Activated CD8-positive, alpha-beta T cell treated with anti-CD3 and anti-CD28 coated beads, Interleukin-2, amount 10 ng/mL, durations not matched to agents 7 days and 5 days (primary cell): ENCODE measurements at regions of chr7 and their contacts with region 1.

Region 1: DNA sequence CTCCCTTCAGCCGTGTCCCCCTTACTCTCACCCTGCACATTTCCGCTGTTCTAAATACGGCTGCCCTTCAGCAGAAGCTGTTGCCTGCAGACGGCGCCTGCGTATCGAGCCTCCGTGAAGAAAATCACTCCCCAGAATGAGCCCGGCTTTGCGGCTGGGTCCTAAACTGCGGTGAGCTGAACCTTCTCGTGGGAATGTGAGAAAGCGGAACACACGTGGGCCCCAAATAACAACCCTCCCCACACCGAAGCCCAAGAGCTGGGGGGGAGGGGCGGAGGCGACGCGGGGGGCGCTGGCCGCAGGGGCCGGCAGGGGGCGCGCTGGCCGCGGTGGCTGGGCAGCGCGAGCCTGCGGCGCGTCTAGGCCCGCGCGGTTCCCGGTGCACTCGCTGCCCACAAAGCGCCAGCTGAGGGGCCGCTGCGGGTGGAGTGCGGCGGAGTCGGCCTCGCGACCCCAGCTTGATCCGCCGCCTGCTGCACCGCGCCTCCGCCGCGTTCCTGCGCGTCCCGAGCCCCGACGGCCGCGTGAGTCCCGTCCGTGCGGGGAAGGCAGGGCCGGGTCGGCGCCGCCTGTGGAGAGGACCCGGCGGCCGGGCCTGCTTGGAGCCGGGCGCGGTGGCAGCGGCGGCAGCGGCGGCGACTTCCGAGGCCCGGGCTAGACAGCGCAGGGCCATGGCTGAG is at the start of gene ZNF398:
- DNase-seq: peak; percentile 77
- ATAC-seq: peak; percentile 77
- H3K4me3 Mint-ChIP-seq: peak within 1 kb of the TSS; percentile 84
- H3K27ac Mint-ChIP-seq: peak within 1 kb of the TSS; percentile 91
- H3K4me1 Mint-ChIP-seq: peaks cover 26% of the 10 kb centered on the region
- H3K27me3 Mint-ChIP-seq: no peaks in the 10 kb centered on the region
- total RNA-seq, gene ZNF398: 11.8 to 13.3 TPM

Region 2: DNA sequence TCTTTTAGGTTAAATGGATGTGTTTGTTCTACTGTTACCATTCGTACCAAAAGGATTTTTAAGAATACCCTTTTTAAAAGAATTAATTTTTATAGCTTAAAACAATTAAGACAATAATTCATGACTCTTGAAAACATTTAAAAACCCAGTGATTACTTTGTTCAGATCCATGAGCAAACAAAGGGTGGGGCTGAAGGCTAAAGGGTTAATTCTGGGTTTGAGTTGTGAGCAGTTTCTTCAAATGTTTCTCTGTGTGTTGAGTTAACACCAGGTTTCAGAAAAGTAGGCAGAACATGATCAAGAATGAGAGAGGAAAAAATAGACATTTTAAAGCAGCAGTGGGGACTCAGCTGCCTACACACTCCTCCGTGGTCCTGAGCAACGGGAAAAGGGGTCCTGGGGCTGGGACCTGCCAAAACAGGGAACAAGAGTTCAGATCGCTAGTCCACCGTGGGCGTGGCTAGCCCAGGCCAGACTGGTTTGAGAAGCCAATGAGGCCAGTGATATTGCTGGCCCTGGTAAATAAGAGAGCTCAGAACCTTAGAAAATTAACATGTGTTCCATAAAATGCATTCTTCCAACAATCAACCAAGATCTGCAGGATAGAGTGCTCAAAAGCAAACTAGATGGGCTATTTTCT is 248.2 kb before region 1 on chr7:
- CTCF ChIA-PET with region 1: no interaction called
- POLR2A ChIA-PET with region 1: no interaction called
- DNase-seq: no peak
- ATAC-seq: no peak
- H3K4me3 Mint-ChIP-seq: no peak overlapping the region
- H3K27ac Mint-ChIP-seq: no peak overlapping the region
- H3K4me1 Mint-ChIP-seq: peaks cover 2% of the 10 kb centered on the region
- H3K27me3 Mint-ChIP-seq: no peaks in the 10 kb centered on the region

Region 3: DNA sequence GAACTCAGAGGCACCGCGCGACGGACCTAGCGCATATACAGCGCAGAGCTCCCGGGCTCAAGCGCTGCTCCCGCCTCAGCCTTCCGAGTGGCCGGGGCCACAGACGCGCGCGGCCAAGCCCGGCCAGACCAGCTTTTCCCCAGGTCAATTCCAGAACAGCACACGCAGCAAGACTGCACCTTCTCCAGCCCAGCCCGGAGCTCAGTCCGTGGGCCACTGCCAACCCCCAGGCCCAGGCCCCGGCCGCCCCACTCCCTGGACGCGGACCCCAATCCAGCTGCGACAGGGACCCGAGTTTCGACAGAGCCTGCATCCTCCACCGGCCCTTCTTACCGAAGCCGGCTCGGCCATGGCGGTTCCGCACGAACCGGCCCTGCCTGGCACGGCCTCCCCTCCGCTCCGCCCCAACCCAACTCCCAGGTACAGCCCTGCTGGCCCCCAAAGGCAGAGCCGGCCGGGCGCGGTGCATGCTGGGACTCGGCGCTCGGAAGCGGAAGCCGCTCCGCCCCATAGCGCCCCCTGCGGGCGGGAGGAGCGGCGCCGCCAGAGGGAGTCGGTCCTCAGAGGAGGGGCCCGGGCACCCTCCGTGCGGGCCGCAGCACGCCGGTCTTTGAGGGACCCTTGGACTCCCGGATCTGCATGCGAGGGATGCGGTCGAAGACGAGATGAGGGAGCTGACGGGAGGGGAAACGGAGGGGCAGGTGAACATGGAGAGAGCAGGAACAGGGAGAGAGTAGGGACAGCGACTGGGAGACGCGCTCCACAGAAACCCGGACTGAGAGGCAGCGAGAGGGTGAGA is 21.1 kb before region 1 on chr7 and contains the start of gene ZNF425:
- CTCF ChIA-PET with region 1: interaction called, 44 read pairs
- POLR2A ChIA-PET with region 1: interaction called, 43 read pairs
- DNase-seq: peak; percentile 93
- ATAC-seq: peak; percentile 89
- H3K4me3 Mint-ChIP-seq: peak within 1 kb of the TSS; percentile 100
- H3K27ac Mint-ChIP-seq: peak within 1 kb of the TSS; percentile 100
- H3K4me1 Mint-ChIP-seq: peaks cover 26% of the 10 kb centered on the region
- H3K27me3 Mint-ChIP-seq: no peaks in the 10 kb centered on the region
- total RNA-seq, gene ZNF425: 0.47 to 0.55 TPM

Region 4: GRCh38 chr7:149133028-149133705 is 14.0 kb before region 1 on chr7:
- CTCF ChIA-PET with region 1: interaction called, 10 read pairs
- POLR2A ChIA-PET with region 1: interaction called, 43 read pairs
- DNase-seq: no peak
- ATAC-seq: no peak
- H3K4me3 Mint-ChIP-seq: no peak overlapping the region
- H3K27ac Mint-ChIP-seq: no peak overlapping the region
- H3K4me1 Mint-ChIP-seq: peaks cover 6% of the 10 kb centered on the region
- H3K27me3 Mint-ChIP-seq: no peaks in the 10 kb centered on the region

Region 5: DNA sequence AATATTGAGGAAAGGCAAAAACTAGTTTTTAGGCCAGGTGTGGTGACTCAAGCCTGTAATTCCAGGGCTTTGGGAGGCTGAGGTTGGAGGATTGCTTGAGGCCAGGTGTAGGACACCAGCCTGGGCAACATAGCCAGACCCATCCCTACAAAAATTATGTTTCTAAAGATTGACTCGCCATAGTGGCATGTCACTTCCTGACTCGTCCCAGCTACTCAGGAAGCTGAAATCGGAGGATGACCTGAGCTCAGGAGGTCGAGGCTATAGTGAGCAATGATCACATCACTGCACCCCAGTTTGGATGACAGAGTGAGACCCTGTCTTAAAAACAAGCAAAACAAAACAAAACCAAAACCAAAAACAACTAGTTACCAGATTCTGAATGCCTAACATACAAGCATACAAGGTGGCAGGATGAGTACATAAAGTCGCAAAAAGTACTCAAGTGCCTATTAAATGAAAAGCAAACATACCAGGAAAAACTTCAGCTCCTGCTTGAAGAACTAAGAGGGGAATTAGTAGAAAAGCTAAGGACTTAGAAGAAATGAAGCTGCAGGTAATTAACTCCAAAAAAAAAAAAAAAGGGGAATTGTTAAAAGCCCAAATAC is 14.1 kb after region 1 on chr7:
- CTCF ChIA-PET with region 1: interaction called, 10 read pairs
- POLR2A ChIA-PET with region 1: no interaction called
- DNase-seq: no peak
- ATAC-seq: no peak
- H3K4me3 Mint-ChIP-seq: no peak overlapping the region
- H3K27ac Mint-ChIP-seq: peak overlapping the region; percentile 64
- H3K4me1 Mint-ChIP-seq: peaks cover 14% of the 10 kb centered on the region
- H3K27me3 Mint-ChIP-seq: no peaks in the 10 kb centered on the region

Region 6: DNA sequence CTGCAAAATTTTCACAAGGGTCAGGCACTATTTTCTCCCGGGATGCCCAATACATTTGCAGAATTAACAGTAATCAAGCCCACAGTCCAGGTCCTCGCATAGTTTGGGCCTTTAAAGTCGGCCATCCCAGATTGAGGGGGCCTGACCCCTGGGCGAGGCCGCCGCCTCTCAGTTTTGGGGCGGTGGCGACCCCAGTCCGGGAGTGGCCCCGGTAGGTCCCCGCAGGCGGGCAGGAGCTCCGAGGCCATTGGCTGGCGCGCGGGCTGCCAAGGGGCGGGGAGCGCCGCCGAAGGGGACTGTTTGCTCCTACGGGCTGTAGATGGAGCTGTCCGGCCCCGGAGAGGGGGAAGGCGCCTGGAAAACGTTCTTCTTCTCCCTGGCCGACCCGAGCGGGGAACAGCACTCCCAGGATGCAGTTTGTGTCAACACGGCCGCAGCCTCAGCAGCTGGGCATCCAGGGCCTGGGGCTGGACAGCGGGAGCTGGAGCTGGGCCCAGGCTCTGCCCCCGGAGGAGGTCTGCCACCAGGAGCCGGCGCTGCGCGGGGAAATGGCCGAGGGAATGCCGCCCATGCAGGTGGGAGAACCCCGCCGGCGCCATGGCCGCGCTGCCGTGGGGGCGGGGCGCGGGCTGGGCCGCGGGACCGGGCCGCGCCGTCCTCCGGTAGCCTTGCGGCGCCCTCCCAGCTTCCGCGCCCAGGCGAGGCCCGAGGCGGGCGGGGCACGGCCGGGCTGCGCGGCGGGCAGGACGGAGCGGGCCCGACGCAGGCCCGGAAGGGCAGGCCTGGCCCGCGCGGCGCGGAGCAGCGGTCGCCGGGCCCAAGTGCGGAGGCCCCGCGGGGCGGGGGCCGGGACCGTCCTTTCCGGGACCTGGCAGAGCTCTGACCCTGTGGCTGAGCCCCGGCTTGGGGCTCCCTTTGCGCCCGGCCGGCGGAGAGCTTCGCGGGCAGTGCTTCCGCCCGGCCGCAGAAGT is 48.3 kb after region 1 on chr7 and contains the start of gene ZNF282:
- CTCF ChIA-PET with region 1: interaction called, 22 read pairs
- POLR2A ChIA-PET with region 1: interaction called, 16 read pairs
- DNase-seq: peak; percentile 81
- ATAC-seq: peak; percentile 92
- H3K4me3 Mint-ChIP-seq: peak within 1 kb of the TSS; percentile 87
- H3K27ac Mint-ChIP-seq: peak within 1 kb of the TSS; percentile 85
- H3K4me1 Mint-ChIP-seq: peaks cover 50% of the 10 kb centered on the region
- H3K27me3 Mint-ChIP-seq: no peaks in the 10 kb centered on the region
- total RNA-seq, gene ZNF282: 28.4 to 30.6 TPM

Region 7: DNA sequence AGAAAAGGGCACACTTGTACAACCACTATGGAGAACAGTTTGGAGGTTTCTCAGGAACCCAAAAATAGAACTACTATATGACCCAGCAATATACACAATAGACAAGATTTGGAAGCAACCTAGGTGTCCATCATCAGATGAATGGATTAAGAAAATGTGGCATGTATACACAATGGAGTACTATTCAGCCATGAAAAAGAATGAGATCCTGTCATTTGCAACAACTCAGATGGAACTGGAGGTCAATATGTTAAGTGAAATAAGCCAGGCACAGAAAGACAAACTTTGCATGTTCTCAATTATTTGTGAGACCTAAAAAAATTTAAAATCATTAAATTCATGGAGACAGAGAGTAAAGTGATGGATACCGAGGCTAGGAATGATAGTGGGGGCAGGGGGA is 507.4 kb after region 1 on chr7:
- CTCF ChIA-PET with region 1: no interaction called
- POLR2A ChIA-PET with region 1: no interaction called
- DNase-seq: no peak
- ATAC-seq: no peak
- H3K4me3 Mint-ChIP-seq: no peak overlapping the region
- H3K27ac Mint-ChIP-seq: no peak overlapping the region
- H3K4me1 Mint-ChIP-seq: no peaks in the 10 kb centered on the region
- H3K27me3 Mint-ChIP-seq: peaks cover 39% of the 10 kb centered on the region